Cardiac septum (tissue), 1 donor: ENCODE measurements at regions of chr17 and their contacts with region 1.

Region 1: GRCh38 chr17:80981062-80981902 is 10.4 kb upstream of the CHMP6 start:
- DNase-seq: no peak

Region 2: GRCh38 chr17:80426681-80427326 is 554.5 kb before region 1 on chr17:
- intact Hi-C with region 1: loop called (anchors 2 kb)
- DNase-seq: peak; percentile 88

Region 3: GRCh38 chr17:80892019-80892855 is 89.0 kb before region 1 on chr17:
- intact Hi-C with region 1: no loop called
- DNase-seq: no peak

Region 4: GRCh38 chr17:81018044-81018802 is 36.9 kb after region 1 on chr17:
- intact Hi-C with region 1: loop called (anchors 5 kb)
- DNase-seq: peak; percentile 73

Region 5: GRCh38 chr17:81044764-81045589 is 63.7 kb after region 1 on chr17:
- intact Hi-C with region 1: no loop called
- DNase-seq: peak; percentile 87